GM12878 (cell line): ENCODE measurements at regions of chr11 and their contacts with region 1.

Region 1: GRCh38 chr11:67630228-67630942 is 648 bp upstream of the NUDT8 start:
- DNase-seq: peak; percentile 75
- ATAC-seq: peak; percentile 86
- H3K4me3 ChIP-seq: peak overlapping the region; percentile 71
- H3K27ac ChIP-seq: peak overlapping the region; percentile 46
- H3K4me1 ChIP-seq: peaks cover 15% of the 10 kb centered on the region
- H3K27me3 ChIP-seq: no peaks in the 10 kb centered on the region
- CTCF ChIP-seq: peak; percentile 54 to 72 (median 67)
- EP300 ChIP-seq: no peak
- POLR2A ChIP-seq: peak; percentile 82
- RAD21 ChIP-seq: peak; percentile 56

Region 2: DNA sequence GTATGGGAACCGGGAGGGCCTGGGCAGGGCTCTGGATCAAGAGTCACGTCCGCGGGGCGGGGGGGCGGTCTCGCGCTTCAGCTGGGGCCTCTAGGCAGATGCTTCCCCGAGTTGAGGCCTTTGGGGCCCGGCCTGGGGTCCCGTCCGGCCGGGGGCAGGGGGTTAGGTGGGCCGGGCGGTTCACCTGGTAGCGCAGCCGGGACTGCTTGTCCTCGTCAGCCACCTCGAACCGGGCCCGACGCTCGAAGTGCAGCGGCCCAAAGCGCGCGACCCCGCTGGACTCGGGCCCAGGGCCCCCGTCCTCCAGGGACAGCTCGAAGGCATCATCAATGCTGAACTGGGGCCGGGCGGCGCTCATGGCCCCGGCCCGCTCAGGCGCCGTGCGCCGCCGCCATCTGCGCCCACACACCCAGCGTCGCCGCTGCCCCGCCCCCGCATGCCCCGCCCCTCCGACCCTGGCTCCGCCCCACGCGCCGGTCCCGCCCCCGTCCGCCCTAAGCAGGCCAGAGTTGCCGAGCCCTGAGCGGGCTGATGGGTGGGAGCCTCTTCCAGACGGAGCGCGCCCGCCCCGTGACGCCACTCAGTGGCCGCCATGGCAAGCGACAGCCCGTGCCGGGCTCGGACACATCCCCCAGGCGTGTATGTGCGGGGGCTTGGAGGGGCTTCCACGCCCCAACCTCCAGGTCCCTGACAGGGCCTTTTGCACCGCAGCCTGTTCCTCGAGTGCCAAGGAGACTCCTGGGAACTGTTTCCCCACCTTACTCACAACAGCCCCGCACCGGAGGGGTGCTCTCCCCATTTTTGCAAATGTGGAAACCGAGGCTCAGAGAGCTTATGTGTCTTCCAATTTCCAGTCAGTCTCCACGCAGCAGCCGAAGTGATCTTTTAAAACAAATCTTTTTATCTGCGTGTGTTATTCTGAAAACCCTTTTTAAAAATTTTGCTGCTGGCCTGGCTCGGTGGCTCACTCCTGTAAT is 161.3 kb before region 1 on chr11 and contains the start of gene TMEM134:
- CTCF ChIA-PET with region 1: no interaction called
- POLR2A ChIA-PET with region 1: no interaction called
- RAD21 ChIA-PET with region 1: no interaction called
- SMC1A ChIA-PET with region 1: no interaction called
- in situ Hi-C with region 1: no loop called
- intact Hi-C with region 1: no loop called
- DNase-seq: peak; percentile 57
- ATAC-seq: peak; percentile 83
- H3K4me3 ChIP-seq: peak within 1 kb of the TSS; percentile 86
- H3K27ac ChIP-seq: peak within 1 kb of the TSS; percentile 78
- H3K4me1 ChIP-seq: peaks cover 33% of the 10 kb centered on the region
- H3K27me3 ChIP-seq: no peaks in the 10 kb centered on the region
- CTCF ChIP-seq: peak; percentile 45 to 76 (median 64)
- EP300 ChIP-seq: peak in 1 of 2 experiments; percentile 46; a peak in 1 of 4 replicates
- POLR2A ChIP-seq: peak; percentile 88
- RAD21 ChIP-seq: peak; percentile 65
- polyA plus RNA-seq, gene TMEM134: 1.6 to 7.0 TPM

Region 3: DNA sequence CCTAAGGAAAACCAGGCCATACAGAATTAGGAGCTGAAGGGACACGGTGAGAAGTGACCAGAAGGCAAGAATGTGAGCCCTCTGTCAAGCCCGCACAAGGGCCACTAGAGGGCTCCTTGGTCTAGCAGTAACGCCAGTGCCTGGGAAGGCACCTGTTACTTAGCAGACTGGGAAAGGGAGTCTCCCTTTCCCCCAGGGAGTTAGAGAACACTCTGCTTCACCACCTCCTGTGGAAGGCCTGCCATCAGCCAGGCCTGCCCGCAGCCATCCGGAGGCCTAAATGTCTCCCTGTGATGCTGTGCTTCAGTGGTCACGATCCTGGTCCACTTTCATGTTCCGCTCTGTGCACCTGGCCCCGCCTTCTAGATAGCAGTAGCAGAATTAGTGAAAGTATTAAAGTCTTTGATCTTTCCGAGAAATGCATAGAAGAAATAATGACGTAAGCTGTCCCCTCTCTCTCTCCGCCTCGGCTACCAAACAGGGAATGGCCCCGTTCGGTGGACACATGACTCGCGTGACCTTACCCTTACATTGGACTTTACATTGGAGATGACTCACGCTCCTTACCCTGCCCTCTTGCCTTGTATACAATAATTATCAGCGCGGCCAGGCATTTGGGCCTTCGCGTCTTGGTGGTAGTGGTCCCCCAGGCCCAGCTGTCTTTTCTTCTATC is 57.5 kb before region 1 on chr11:
- CTCF ChIA-PET with region 1: interaction called, 35 read pairs
- POLR2A ChIA-PET with region 1: no interaction called
- RAD21 ChIA-PET with region 1: interaction called, 25 read pairs
- SMC1A ChIA-PET with region 1: interaction called, 3 read pairs
- in situ Hi-C with region 1: no loop called
- intact Hi-C with region 1: no loop called
- DNase-seq: no peak
- ATAC-seq: peak; percentile 77
- H3K4me3 ChIP-seq: no peak overlapping the region
- H3K27ac ChIP-seq: no peak overlapping the region
- H3K4me1 ChIP-seq: peaks cover 5% of the 10 kb centered on the region
- H3K27me3 ChIP-seq: no peaks in the 10 kb centered on the region; a peak in 1 of 4 replicates
- CTCF ChIP-seq: peak; percentile 56 to 85 (median 62)
- EP300 ChIP-seq: no peak
- POLR2A ChIP-seq: no peak
- RAD21 ChIP-seq: peak; percentile 73

Region 4: DNA sequence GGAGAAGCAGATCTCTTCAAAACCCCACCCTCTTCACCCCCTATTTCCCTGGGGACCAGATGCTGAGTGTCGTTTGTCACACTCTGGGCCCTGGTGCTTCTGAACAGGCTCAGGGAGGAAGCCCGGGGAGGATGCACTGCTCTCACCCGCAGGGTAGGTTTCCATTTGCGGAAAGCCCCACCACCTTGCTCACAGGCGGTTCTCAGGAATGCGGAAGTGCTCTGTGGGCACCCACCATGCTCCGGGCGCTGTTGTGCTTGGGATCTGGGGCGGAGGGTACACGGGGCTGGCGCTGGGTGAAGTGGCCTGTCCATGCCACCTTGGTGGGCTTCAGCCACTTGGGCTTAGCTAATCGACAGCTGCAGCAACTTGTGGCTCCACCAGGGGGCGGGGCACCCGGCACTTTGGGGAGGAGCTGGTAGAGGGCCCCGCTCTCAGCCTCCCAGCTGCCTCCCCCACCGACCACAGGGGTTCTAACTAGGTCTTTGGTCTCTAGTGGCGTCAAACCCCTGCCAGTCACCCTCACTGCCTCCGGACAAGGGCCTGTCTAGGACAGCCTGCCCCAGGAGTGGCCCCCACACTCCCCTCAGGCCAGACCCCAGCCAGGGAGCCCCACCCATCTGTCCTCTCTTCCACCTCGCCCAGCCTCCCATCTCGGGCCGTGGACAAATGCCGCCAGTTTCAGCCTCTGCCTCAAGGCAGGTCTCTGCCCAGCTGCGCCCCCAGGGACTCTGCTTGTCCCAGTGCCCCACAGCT is 16.2 kb before region 1 on chr11:
- CTCF ChIA-PET with region 1: interaction called, 71 read pairs
- POLR2A ChIA-PET with region 1: interaction called, 14 read pairs
- RAD21 ChIA-PET with region 1: interaction called, 26 read pairs
- SMC1A ChIA-PET with region 1: interaction called, 14 read pairs
- in situ Hi-C with region 1: no loop called
- intact Hi-C with region 1: no loop called
- DNase-seq: peak; percentile 88
- ATAC-seq: peak; percentile 95
- H3K4me3 ChIP-seq: peak overlapping the region; percentile 46; the same call in 1 of the 2 replicates
- H3K27ac ChIP-seq: peak overlapping the region; percentile 97
- H3K4me1 ChIP-seq: peaks cover 22% of the 10 kb centered on the region
- H3K27me3 ChIP-seq: no peaks in the 10 kb centered on the region
- CTCF ChIP-seq: peak; percentile 34 to 72 (median 42)
- EP300 ChIP-seq: no peak; a peak in 1 of 4 replicates
- POLR2A ChIP-seq: peak; percentile 92
- RAD21 ChIP-seq: no peak

Region 5: DNA sequence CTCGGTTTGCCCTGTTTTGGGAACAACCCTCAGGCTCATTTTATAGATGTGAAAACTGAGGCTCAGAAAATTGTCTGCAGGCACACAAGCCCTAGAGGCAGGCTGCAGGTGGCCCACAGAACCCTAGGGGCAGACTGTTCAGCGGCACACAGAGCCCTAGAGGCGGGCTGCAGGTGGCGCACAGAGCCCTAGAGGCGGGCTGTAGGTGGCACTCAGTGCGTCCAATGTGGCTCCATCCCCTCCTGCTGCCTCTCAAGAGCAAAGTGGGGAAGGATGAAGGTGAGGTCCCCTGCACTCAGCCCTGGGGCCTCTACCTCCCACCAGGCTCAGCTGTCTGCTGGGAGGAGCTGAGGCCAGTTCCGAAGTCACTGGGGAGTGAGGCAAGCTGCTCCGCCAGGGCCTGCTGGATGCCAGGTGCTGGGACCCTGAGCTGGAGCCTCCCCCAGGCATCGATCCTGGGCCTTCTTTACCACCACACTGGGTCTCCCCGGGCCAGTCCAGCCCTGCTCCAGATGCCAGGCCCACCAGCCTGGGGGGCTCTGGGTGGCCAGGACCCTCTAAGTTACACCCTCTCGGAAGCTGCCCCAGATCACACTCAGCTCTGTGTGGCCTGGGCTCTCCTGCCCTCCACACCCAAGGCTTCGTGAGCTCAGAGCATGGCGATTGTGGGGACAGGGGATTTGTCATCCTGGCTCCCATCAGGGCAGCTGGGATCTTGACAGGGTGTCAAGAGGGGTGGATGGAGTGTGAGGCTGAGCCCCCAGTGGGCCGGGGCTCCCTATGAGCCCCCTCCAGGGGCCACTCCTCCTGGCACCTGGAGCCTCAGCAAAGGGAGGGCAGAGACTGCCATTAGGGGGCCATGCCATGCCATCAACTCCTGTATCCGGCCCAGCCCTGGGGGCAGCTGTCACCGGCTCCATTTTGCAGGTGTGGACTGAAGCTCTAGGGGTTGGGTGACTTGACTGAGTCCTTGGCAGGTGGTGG is 18.0 kb after region 1 on chr11:
- CTCF ChIA-PET with region 1: interaction called, 64 read pairs
- POLR2A ChIA-PET with region 1: interaction called, 16 read pairs
- RAD21 ChIA-PET with region 1: interaction called, 18 read pairs
- SMC1A ChIA-PET with region 1: interaction called, 6 read pairs
- in situ Hi-C with region 1: no loop called
- intact Hi-C with region 1: no loop called
- DNase-seq: no peak
- ATAC-seq: peak; percentile 84
- H3K4me3 ChIP-seq: peak overlapping the region; percentile 9; the same call in 1 of the 2 replicates
- H3K27ac ChIP-seq: peak overlapping the region; percentile 78
- H3K4me1 ChIP-seq: peaks cover 61% of the 10 kb centered on the region
- H3K27me3 ChIP-seq: no peaks in the 10 kb centered on the region
- CTCF ChIP-seq: peak; percentile 71 to 72 (median 72)
- EP300 ChIP-seq: no peak
- POLR2A ChIP-seq: peak; percentile 43; the same call in 1 of the 2 replicates
- RAD21 ChIP-seq: peak; percentile 52

Region 6: GRCh38 chr11:67656278-67656922 is 26.0 kb after region 1 on chr11:
- CTCF ChIA-PET with region 1: interaction called, 52 read pairs
- POLR2A ChIA-PET with region 1: interaction called, 4 read pairs
- RAD21 ChIA-PET with region 1: interaction called, 29 read pairs
- SMC1A ChIA-PET with region 1: interaction called, 52 read pairs
- in situ Hi-C with region 1: no loop called
- intact Hi-C with region 1: loop called (anchors 1 kb)
- DNase-seq: peak; percentile 49
- ATAC-seq: peak; percentile 36; the same call in 2 of the 3 replicates
- H3K4me3 ChIP-seq: peak overlapping the region; percentile 14; the same call in 1 of the 2 replicates
- H3K27ac ChIP-seq: peak overlapping the region; percentile 71
- H3K4me1 ChIP-seq: peaks cover 29% of the 10 kb centered on the region
- H3K27me3 ChIP-seq: no peaks in the 10 kb centered on the region
- CTCF ChIP-seq: no peak
- EP300 ChIP-seq: no peak
- POLR2A ChIP-seq: no peak
- RAD21 ChIP-seq: no peak

Region 7: DNA sequence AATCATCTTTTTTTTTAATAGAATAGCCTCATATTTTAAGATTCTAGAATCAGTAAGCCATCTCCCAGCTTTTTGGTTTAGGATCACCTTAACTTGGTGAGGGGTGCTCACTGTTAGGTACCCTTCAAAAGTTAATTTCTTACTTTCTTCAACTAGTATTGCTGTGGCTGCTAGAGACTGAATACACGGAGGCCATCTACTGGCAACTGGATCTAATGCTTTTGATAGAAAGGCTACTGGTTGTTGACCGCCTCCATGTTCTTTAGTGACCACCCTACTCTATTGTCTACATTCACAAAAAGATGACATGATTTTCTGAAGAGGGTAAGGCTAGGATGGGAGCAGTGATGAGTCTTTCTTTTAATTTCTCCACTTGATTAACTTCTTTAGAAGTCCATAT is 60.8 kb after region 1 on chr11:
- CTCF ChIA-PET with region 1: interaction called, 13 read pairs
- POLR2A ChIA-PET with region 1: no interaction called
- RAD21 ChIA-PET with region 1: no interaction called
- SMC1A ChIA-PET with region 1: interaction called, 3 read pairs
- in situ Hi-C with region 1: no loop called
- intact Hi-C with region 1: no loop called
- DNase-seq: no peak
- ATAC-seq: 0 out of 3 replicates have a peak, but pooled peaks have one; percentile 36
- H3K4me3 ChIP-seq: no peak overlapping the region
- H3K27ac ChIP-seq: no peak overlapping the region
- H3K4me1 ChIP-seq: no peaks in the 10 kb centered on the region
- H3K27me3 ChIP-seq: peaks cover 1 to 3% of the 10 kb centered on the region in 2 experiments; a peak in 3 of 4 replicates
- CTCF ChIP-seq: peak; percentile 26 to 42 (median 39); a peak in 5 of 6 replicates
- EP300 ChIP-seq: no peak
- POLR2A ChIP-seq: no peak
- RAD21 ChIP-seq: peak; percentile 52

Region 8: DNA sequence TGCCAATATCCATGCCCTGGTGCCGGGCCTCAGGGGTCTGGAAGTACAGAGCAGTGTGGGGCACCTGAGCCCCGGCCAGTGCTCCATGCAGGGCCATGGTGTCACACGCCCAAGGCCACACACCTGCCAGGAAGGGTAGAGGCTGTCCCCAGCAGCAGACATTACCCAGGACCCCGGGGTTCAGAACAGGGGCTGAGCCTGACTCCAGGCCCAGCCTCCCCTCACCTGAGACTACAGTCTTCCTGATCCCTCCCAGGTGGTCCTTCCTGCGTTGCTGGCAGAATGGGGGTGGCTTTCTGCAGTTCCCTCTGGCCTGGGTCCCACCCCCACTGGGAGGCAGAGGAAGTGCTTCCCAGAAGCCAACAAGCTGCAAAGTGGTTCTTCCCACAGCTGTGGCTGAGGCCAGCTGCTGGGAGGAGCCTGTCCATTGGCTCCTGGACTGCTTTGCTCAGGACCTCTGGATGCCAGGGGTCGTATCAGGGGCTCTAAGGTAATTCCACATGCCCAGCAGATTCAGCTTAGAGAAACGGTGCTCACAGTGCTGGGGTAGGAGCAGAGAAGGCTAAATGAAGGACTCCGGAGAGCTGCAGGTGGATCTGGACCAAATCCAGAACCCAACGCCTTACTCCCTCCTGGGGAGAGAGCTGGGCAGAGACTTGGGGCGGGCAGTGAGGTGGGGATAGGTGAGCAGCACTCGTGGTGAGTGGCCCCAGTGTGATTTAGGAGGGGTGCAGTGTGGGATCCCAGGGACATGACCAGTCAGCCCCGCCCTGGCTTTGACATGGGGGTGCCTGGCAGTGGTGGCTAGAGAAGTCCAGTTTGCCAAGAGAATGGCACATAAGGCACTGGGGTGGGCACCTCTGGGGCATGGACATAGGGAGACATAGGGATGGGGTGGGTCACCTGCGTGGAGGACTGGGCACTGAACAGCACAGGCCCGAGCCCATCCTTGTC is 421.1 kb after region 1 on chr11:
- CTCF ChIA-PET with region 1: no interaction called
- POLR2A ChIA-PET with region 1: no interaction called
- RAD21 ChIA-PET with region 1: no interaction called
- SMC1A ChIA-PET with region 1: no interaction called
- in situ Hi-C with region 1: no loop called
- intact Hi-C with region 1: no loop called
- DNase-seq: no peak
- ATAC-seq: no peak
- H3K4me3 ChIP-seq: no peak overlapping the region
- H3K27ac ChIP-seq: no peak overlapping the region
- H3K4me1 ChIP-seq: no peaks in the 10 kb centered on the region
- H3K27me3 ChIP-seq: no peaks in the 10 kb centered on the region
- CTCF ChIP-seq: no peak
- EP300 ChIP-seq: no peak
- POLR2A ChIP-seq: peak; percentile 43; the same call in 1 of the 2 replicates
- RAD21 ChIP-seq: no peak